ENCODE measurements at regions of chr2 and their contacts with region 1.

Region 1: DNA sequence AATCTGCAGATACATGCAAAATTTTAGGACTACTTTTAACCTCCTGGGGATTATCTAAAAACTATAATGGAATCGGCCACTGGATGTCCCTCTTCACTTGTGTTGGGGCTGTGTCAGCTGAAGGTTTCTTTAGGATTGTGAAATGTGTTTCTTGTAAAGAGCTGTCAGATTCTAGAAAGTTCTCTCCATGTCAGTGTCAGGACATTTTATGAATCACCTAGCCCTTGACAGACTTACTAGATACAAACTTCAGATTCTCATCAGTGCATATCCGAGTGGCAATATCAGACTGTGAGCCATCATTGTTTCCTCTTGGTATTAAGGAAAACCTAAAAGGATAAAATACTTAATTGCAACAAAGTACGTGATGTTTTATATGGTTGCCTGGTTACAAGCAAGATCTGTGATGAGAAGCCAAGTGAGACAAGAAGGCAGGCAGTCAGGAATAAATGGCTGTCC is 107.3 kb downstream of the CPS1 start:
- DNase-seq: peak; percentile 46
- ATAC-seq: peak; percentile 66
- H3K4me3 ChIP-seq: no peak overlapping the region
- H3K27ac ChIP-seq: no peak overlapping the region
- H3K4me1 ChIP-seq: no peaks in the 10 kb centered on the region
- H3K27me3 ChIP-seq: no peaks in the 10 kb centered on the region
- CTCF ChIP-seq: peak; percentile 63

Region 2: GRCh38 chr2:210309548-210310233 is 354.0 kb before region 1 on chr2:
- CTCF ChIA-PET with region 1: no interaction called
- POLR2A ChIA-PET with region 1: no interaction called
- intact Hi-C with region 1: no loop called
- DNase-seq: no peak
- ATAC-seq: no peak
- H3K4me3 ChIP-seq: no peak overlapping the region
- H3K27ac ChIP-seq: no peak overlapping the region
- H3K4me1 ChIP-seq: no peaks in the 10 kb centered on the region
- H3K27me3 ChIP-seq: peaks cover 40% of the 10 kb centered on the region
- CTCF ChIP-seq: no peak

Region 3: GRCh38 chr2:210606001-210606400 is 57.7 kb before region 1 on chr2:
- CTCF ChIA-PET with region 1: no interaction called
- POLR2A ChIA-PET with region 1: no interaction called
- intact Hi-C with region 1: no loop called
- DNase-seq: no peak
- ATAC-seq: no peak
- H3K4me3 ChIP-seq: no peak overlapping the region
- H3K27ac ChIP-seq: no peak overlapping the region
- H3K4me1 ChIP-seq: no peaks in the 10 kb centered on the region
- H3K27me3 ChIP-seq: no peaks in the 10 kb centered on the region
- CTCF ChIP-seq: no peak

Region 4: GRCh38 chr2:211035548-211036185 is 372.0 kb after region 1 on chr2:
- CTCF ChIA-PET with region 1: interaction called, 3 read pairs
- POLR2A ChIA-PET with region 1: no interaction called
- intact Hi-C with region 1: loop called (anchors 1 kb)
- DNase-seq: peak; percentile 72
- ATAC-seq: peak; percentile 27
- H3K4me3 ChIP-seq: no peak overlapping the region
- H3K27ac ChIP-seq: no peak overlapping the region
- H3K4me1 ChIP-seq: no peaks in the 10 kb centered on the region
- H3K27me3 ChIP-seq: peaks cover 13% of the 10 kb centered on the region; the same call in 1 of the 2 replicates
- CTCF ChIP-seq: peak; percentile 92

Region 5: DNA sequence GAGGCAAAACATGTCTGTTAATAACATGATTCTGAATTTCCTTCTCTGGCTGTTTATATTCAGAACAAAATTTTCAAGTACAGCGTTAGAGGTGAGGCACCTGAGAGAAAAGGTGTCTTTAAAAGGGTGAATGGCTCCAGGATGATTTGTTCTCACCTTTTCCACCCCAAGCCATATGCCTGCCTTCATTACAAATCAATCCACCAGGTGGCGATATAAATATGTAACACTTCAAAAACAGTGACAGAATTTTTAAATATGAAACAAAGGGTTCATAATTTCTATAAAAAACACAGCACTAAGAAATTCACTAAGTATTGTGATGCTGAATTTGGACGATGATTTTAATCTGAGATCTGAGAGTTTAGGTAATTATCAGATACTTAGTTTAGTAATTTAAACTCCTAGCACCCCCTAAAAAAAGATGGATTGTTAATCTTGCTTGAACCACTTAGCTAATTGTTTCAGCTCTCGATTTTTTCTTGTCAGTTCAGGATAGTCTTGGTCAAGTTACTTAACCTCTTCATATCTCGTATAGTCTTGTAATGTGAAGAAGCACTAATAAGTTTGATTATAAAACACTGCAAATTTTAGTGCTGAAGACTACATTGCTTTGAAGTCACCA is 421.5 kb after region 1 on chr2:
- CTCF ChIA-PET with region 1: no interaction called
- POLR2A ChIA-PET with region 1: no interaction called
- intact Hi-C with region 1: loop called (anchors 5 kb)
- DNase-seq: peak; percentile 81
- ATAC-seq: peak; percentile 56
- H3K4me3 ChIP-seq: no peak overlapping the region
- H3K27ac ChIP-seq: no peak overlapping the region
- H3K4me1 ChIP-seq: no peaks in the 10 kb centered on the region
- H3K27me3 ChIP-seq: 0 out of 2 replicates have a peak, but pooled peaks cover 10% of the 10 kb centered on the region
- CTCF ChIP-seq: peak; percentile 89

Measured in PC-3 (cell line).